PC-3 (cell line): ENCODE measurements at regions of chr11 and their contacts with region 1.

Region 1: GRCh38 chr11:57379732-57380131 is 1.2 kb downstream of the PRG3 start:
- DNase-seq: peak; percentile 65
- ATAC-seq: no peak
- H3K4me3 ChIP-seq: no peak overlapping the region
- H3K27ac ChIP-seq: no peak overlapping the region
- H3K4me1 ChIP-seq: no peaks in the 10 kb centered on the region
- H3K27me3 ChIP-seq: peaks cover 14% of the 10 kb centered on the region; the same call in 1 of the 2 replicates
- CTCF ChIP-seq: no peak

Region 2: GRCh38 chr11:57541169-57541568 is 161.4 kb after region 1 on chr11:
- CTCF ChIA-PET with region 1: interaction called, 11 read pairs
- POLR2A ChIA-PET with region 1: no interaction called
- intact Hi-C with region 1: no loop called
- DNase-seq: no peak
- ATAC-seq: no peak
- H3K4me3 ChIP-seq: no peak overlapping the region
- H3K27ac ChIP-seq: no peak overlapping the region
- H3K4me1 ChIP-seq: no peaks in the 10 kb centered on the region
- H3K27me3 ChIP-seq: no peaks in the 10 kb centered on the region
- CTCF ChIP-seq: no peak